Activated CD4-positive, alpha-beta memory T cell treated with anti-CD3 and anti-CD28 coated beads, Interleukin-2, amount 10 ng/mL, durations not matched to agents 7 days and 5 days (primary cell): ENCODE measurements at regions of chr14 and their contacts with region 1.

Region 1: GRCh38 chr14:50860478-50861086 is 11.3 kb upstream of the ABHD12B start:
- DNase-seq: peak; percentile 89
- H3K4me3 Mint-ChIP-seq: peak overlapping the region; percentile 83
- H3K27ac Mint-ChIP-seq: peak overlapping the region; percentile 47
- H3K4me1 Mint-ChIP-seq: peaks cover 12% of the 10 kb centered on the region
- H3K27me3 Mint-ChIP-seq: peaks cover 7% of the 10 kb centered on the region

Region 2: GRCh38 chr14:50542941-50543418 is 317.6 kb before region 1 on chr14:
- CTCF ChIA-PET with region 1: interaction called, 16 read pairs
- POLR2A ChIA-PET with region 1: no interaction called
- DNase-seq: peak; percentile 35
- H3K4me3 Mint-ChIP-seq: no peak overlapping the region
- H3K27ac Mint-ChIP-seq: no peak overlapping the region
- H3K4me1 Mint-ChIP-seq: peaks cover 9% of the 10 kb centered on the region
- H3K27me3 Mint-ChIP-seq: peaks cover 8% of the 10 kb centered on the region

Region 3: GRCh38 chr14:50619556-50620141 is 240.9 kb before region 1 on chr14:
- CTCF ChIA-PET with region 1: interaction called, 18 read pairs
- POLR2A ChIA-PET with region 1: no interaction called
- DNase-seq: no peak
- H3K4me3 Mint-ChIP-seq: no peak overlapping the region
- H3K27ac Mint-ChIP-seq: no peak overlapping the region
- H3K4me1 Mint-ChIP-seq: peaks cover 2% of the 10 kb centered on the region
- H3K27me3 Mint-ChIP-seq: no peaks in the 10 kb centered on the region

Region 4: GRCh38 chr14:50736932-50737419 is 123.6 kb before region 1 on chr14:
- CTCF ChIA-PET with region 1: interaction called, 12 read pairs
- POLR2A ChIA-PET with region 1: interaction called, 3 read pairs
- DNase-seq: peak; percentile 31
- H3K4me3 Mint-ChIP-seq: no peak overlapping the region
- H3K27ac Mint-ChIP-seq: peak overlapping the region; percentile 56
- H3K4me1 Mint-ChIP-seq: peaks cover 37% of the 10 kb centered on the region
- H3K27me3 Mint-ChIP-seq: no peaks in the 10 kb centered on the region

Region 5: GRCh38 chr14:50778721-50779483 is 81.7 kb before region 1 on chr14:
- CTCF ChIA-PET with region 1: interaction called, 56 read pairs
- POLR2A ChIA-PET with region 1: interaction called, 10 read pairs
- DNase-seq: no peak
- H3K4me3 Mint-ChIP-seq: no peak overlapping the region
- H3K27ac Mint-ChIP-seq: no peak overlapping the region
- H3K4me1 Mint-ChIP-seq: peaks cover 21% of the 10 kb centered on the region
- H3K27me3 Mint-ChIP-seq: no peaks in the 10 kb centered on the region

Region 6: GRCh38 chr14:50823051-50823761 is 37.4 kb before region 1 on chr14:
- CTCF ChIA-PET with region 1: interaction called, 19 read pairs
- POLR2A ChIA-PET with region 1: interaction called, 3 read pairs
- DNase-seq: no peak
- H3K4me3 Mint-ChIP-seq: peak overlapping the region; percentile 7
- H3K27ac Mint-ChIP-seq: peak overlapping the region; percentile 60
- H3K4me1 Mint-ChIP-seq: peaks cover 63% of the 10 kb centered on the region
- H3K27me3 Mint-ChIP-seq: no peaks in the 10 kb centered on the region

Region 7: DNA sequence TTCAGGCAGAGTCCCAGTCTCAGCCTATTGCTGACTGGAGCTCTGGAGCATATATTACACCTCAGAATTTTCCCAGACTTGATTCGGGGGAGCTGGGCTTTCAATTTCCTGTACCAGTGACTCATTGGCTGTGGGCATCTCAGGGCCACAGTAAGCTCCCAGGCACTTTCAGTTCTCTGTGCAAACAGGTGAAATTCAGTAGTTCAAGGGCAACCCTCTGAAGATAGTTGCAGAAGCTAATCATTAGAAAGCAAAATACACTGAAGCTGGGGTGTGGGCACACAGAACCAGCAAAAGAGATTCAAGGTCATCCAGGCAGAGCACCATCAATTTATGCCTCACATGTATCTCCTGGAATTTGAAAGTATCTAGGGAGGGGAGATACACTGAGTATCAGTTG is 21.5 kb before region 1 on chr14:
- CTCF ChIA-PET with region 1: interaction called, 23 read pairs
- POLR2A ChIA-PET with region 1: interaction called, 3 read pairs
- DNase-seq: no peak
- H3K4me3 Mint-ChIP-seq: no peak overlapping the region
- H3K27ac Mint-ChIP-seq: no peak overlapping the region
- H3K4me1 Mint-ChIP-seq: peaks cover 21% of the 10 kb centered on the region
- H3K27me3 Mint-ChIP-seq: peaks cover 10% of the 10 kb centered on the region